BJ (cell line): ENCODE measurements at regions of chr10 and their contacts with region 1.

Region 1: GRCh38 chr10:36880898-36881297 is 244.5 kb upstream of the ANKRD30A start:
- DNase-seq: no peak
- H3K4me3 ChIP-seq: no peak overlapping the region
- H3K27me3 ChIP-seq: no peaks in the 10 kb centered on the region
- CTCF ChIP-seq: peak; percentile 41

Region 2: GRCh38 chr10:35635576-35635975 is 1245.3 kb before region 1 on chr10:
- CTCF ChIA-PET with region 1: interaction called, 16 read pairs
- POLR2A ChIA-PET with region 1: no interaction called
- DNase-seq: no peak
- H3K4me3 ChIP-seq: no peak overlapping the region
- H3K27me3 ChIP-seq: peaks cover 4% of the 10 kb centered on the region
- CTCF ChIP-seq: peak; percentile 86